A673 (cell line): ENCODE measurements at regions of chr4 and their contacts with region 1.

Region 1: DNA sequence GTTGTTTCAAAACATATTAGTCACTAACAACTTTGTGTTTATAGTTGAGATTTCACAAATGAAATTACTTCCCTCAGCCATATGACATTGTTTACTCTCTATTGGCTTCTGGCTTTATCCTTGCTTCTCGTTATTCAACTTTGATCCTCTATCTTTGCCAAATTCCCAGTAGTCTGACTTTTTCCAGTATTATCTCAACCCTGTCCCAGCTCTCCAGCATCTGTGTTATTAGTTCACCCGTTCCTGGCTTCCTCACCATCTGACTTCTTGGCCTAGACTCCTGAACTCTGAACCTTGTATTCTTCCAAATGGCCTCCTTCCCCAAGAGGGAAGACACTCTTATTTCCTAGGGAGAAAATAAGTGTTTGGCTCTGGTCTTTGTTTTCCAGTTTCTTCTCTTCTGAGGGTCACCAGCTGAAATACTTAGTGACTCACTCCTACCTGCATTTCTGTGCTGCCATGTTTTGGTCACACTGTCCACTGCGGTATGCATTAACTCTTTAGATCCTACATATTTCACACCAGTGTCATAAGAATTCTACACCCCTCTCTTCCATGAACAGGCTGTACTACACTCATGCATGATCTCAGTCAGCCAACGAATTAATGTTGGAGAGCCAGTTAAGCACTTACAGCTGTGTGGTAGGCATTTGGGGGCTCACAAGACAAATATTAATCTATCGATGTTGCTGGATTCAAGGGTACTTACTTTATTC is 17.0 kb upstream of the ARHGAP24 start:
- DNase-seq: no peak
- H3K4me3 ChIP-seq: no peak overlapping the region
- H3K27ac ChIP-seq: no peak overlapping the region
- H3K4me1 ChIP-seq: no peaks in the 10 kb centered on the region
- H3K27me3 ChIP-seq: no peaks in the 10 kb centered on the region
- CTCF ChIP-seq: no peak

Region 2: DNA sequence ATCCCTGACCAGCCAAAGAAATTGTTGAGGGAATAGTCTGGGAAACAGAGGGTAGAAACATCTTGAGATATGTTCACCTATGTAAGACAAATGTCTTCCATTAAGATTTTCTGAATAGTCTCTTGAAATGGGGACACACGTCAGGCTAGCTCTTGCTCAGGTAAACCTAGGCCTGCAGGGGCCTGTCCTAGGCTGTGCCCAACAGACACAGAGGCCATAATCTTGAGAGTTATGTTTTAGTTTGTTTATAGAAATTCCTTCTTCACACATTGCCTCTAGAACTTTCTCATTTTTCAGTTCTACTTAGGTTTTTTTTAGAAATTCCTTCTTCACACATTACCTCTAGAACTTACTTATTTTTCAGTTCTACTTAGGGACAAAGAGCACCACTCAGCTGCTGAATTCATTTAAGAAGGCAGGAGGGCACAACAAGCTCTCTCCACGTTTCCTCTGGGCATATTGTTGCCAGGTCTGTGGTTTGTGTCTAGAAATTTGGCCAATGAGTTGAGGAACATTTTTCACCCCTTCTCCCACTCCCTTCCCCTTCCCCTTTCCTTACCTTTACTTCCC is 111.9 kb after region 1 on chr4:
- CTCF ChIA-PET with region 1: no interaction called
- POLR2A ChIA-PET with region 1: interaction called, 14 read pairs
- intact Hi-C with region 1: no loop called
- DNase-seq: no peak
- H3K4me3 ChIP-seq: no peak overlapping the region
- H3K27ac ChIP-seq: no peak overlapping the region
- H3K4me1 ChIP-seq: no peaks in the 10 kb centered on the region
- H3K27me3 ChIP-seq: no peaks in the 10 kb centered on the region
- CTCF ChIP-seq: no peak

Region 3: DNA sequence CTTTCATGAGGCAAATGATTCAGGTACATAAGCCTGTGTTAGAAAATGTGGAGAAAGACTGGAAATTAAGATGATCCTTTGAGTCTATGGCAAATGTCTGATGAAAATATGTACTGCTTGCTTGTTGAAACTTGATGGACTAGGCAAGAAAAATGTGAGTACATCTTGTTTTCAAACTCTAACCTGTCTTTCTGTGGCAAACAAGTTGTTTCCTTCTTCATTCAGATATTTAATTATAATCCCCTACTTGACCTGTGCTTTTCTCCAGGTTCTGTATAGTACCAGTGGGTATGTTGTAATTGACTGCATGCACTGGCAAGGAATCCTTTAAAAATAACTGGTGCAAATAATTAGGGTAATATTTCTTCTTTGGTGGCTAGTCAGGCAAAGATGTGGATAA is 153.8 kb after region 1 on chr4:
- CTCF ChIA-PET with region 1: no interaction called
- POLR2A ChIA-PET with region 1: no interaction called
- intact Hi-C with region 1: no loop called
- DNase-seq: no peak
- H3K4me3 ChIP-seq: no peak overlapping the region
- H3K27ac ChIP-seq: no peak overlapping the region
- H3K4me1 ChIP-seq: no peaks in the 10 kb centered on the region
- H3K27me3 ChIP-seq: no peaks in the 10 kb centered on the region
- CTCF ChIP-seq: no peak